Right cardiac atrium (tissue), 5 donors: ENCODE measurements at regions of chr14 and their contacts with region 1.

Region 1: DNA sequence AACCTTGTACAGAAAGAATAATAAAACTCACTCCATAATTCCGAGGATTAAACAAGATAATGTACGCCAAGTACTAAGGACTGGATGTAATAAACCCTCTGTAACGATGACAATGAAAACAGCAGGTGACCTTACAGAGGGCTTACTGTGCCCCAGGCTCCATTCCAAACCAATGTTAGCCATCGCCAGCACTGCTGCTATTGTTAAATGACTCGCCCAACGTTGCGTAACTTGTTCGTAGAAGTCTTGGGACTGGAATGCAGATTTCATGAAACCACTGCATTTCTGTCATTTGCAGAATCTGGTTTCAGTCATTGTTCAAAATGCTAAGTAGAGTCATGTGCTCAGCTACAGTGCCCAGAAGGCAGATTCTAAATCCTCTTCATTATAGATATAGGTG is 728 bp upstream of the STON2 start:
- DNase-seq: peak in 2 of 3 donors; percentile 66 to 74
- ATAC-seq: peak; percentile 67 to 71
- H3K4me3 ChIP-seq: no peak overlapping the region
- H3K27ac ChIP-seq: no peak overlapping the region
- H3K4me1 ChIP-seq: peaks cover 2% of the 10 kb centered on the region
- H3K27me3 ChIP-seq: no peaks in the 10 kb centered on the region

Region 2: GRCh38 chr14:81382517-81383132 is 18.2 kb before region 1 on chr14:
- intact Hi-C with region 1: loop called in 1 of 4 experiments (anchors 2 kb)
- DNase-seq: no peak
- ATAC-seq: no peak
- H3K4me3 ChIP-seq: no peak overlapping the region
- H3K27ac ChIP-seq: no peak overlapping the region
- H3K4me1 ChIP-seq: no peaks in the 10 kb centered on the region
- H3K27me3 ChIP-seq: no peaks in the 10 kb centered on the region